ENCODE measurements at regions of chr5 and their contacts with region 1.

Region 1: DNA sequence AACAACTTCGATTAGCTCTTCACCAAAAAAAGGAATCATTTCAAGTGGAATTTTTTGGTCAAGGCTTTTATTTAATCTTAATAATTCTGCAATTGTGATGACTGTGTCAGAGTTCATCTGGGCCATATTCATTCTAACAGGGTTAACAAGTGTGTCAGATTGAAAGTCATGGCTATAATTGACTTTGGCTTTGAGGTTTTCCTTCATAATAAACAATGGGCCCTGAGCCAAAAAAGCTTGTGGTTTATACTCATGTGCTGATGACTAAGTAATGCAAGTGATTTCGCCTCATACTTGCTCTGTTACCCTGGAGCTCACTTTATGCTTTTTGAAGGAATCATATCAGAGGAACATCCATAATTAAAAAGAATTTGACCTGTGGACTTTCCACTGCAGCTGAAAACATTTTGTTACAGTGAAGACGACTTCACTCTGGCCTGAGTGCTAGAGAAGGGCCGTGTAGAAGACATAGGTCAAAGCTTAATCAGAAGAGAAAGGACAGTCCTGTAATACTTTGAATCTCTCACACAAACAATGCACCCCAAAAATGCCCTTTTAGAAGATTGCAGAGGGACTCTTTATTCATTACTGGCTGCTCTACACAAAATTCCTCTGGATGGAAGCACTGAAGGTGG is 101.7 kb downstream of the GDNF start:
- DNase-seq: peak; percentile 34
- H3K4me3 Mint-ChIP-seq: no peak overlapping the region
- H3K27ac Mint-ChIP-seq: no peak overlapping the region
- H3K4me1 Mint-ChIP-seq: peaks cover 28% of the 10 kb centered on the region
- H3K27me3 Mint-ChIP-seq: no peaks in the 10 kb centered on the region

Region 2: GRCh38 chr5:37722236-37723146 is 15.7 kb before region 1 on chr5:
- CTCF ChIA-PET with region 1: interaction called, 56 read pairs
- POLR2A ChIA-PET with region 1: interaction called, 60 read pairs
- DNase-seq: peak; percentile 58
- H3K4me3 Mint-ChIP-seq: peak overlapping the region; percentile 28
- H3K27ac Mint-ChIP-seq: peak overlapping the region; percentile 84
- H3K4me1 Mint-ChIP-seq: peaks cover 35% of the 10 kb centered on the region
- H3K27me3 Mint-ChIP-seq: no peaks in the 10 kb centered on the region

Region 3: DNA sequence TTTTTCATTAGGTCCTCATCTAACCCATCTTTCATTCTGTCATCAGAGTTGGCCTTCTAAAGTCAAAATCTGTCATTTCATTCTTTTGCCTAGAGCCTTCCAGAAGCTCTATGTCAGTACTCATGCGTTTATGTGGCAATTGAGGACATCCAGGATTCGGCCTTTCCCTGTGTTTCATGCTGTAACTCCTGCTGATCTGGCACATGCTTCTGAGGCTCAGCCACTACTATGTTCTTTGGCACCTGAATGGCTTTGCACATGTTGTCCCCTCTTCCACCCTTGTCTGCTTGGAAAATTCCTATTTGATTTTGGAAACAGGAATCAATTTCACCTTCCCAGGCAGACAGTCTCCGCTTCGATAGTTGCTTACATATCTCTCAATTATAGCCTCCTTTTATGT is 16.8 kb after region 1 on chr5:
- CTCF ChIA-PET with region 1: no interaction called
- POLR2A ChIA-PET with region 1: no interaction called
- DNase-seq: no peak
- H3K4me3 Mint-ChIP-seq: no peak overlapping the region
- H3K27ac Mint-ChIP-seq: no peak overlapping the region
- H3K4me1 Mint-ChIP-seq: no peaks in the 10 kb centered on the region
- H3K27me3 Mint-ChIP-seq: no peaks in the 10 kb centered on the region

Region 4: DNA sequence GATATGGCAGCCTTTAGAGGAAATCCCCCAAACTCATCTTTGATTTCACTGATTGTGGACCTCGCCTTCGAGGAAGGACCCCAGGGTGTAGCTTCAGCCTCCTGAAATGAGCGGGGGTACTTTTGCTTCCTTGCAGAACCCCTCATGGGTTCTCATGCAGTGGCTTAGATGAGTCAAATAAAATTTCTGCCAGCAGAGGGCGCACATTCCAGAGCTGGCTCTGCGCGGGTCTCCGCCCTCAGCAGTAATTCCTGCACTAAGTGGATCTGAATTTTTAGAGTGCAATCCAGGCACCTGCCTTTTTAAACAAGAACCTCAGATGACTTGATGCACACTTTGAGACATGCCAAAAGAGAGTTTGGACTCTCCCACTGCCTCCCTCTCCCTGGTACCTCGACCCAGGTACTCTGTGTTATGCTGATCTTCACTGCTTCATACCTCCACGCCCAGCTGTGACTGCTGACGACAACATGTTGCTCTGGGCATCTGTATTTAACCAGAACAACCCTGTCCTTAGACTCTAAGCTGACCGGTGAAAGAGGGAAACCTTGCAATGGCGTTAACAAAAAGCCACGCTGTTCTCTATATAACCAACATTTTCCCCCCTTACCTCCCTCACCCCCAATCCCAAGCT is 527.5 kb after region 1 on chr5:
- CTCF ChIA-PET with region 1: no interaction called
- POLR2A ChIA-PET with region 1: no interaction called
- DNase-seq: peak; percentile 43
- H3K4me3 Mint-ChIP-seq: no peak overlapping the region
- H3K27ac Mint-ChIP-seq: no peak overlapping the region
- H3K4me1 Mint-ChIP-seq: no peaks in the 10 kb centered on the region
- H3K27me3 Mint-ChIP-seq: peaks cover 23% of the 10 kb centered on the region